ENCODE measurements at regions of chr3 and their contacts with region 1.

Region 1: GRCh38 chr3:151282921-151283320 is 4.6 kb upstream of the P2RY14 start:
- DNase-seq: no peak
- ATAC-seq: peak; percentile 77
- H3K4me3 ChIP-seq: no peak overlapping the region
- H3K27ac ChIP-seq: no peak overlapping the region
- H3K4me1 ChIP-seq: peaks cover 6% of the 10 kb centered on the region
- H3K27me3 ChIP-seq: no peaks in the 10 kb centered on the region
- CTCF ChIP-seq: peak; percentile 49 to 67 (median 53); a peak in 5 of 6 replicates
- EP300 ChIP-seq: no peak
- POLR2A ChIP-seq: no peak
- RAD21 ChIP-seq: peak; percentile 90

Region 2: GRCh38 chr3:150925751-150926201 is 357.1 kb before region 1 on chr3:
- CTCF ChIA-PET with region 1: no interaction called
- POLR2A ChIA-PET with region 1: no interaction called
- RAD21 ChIA-PET with region 1: no interaction called
- SMC1A ChIA-PET with region 1: no interaction called
- in situ Hi-C with region 1: no loop called
- intact Hi-C with region 1: loop called (anchors 5 kb)
- DNase-seq: no peak
- ATAC-seq: peak; percentile 99
- H3K4me3 ChIP-seq: no peak overlapping the region
- H3K27ac ChIP-seq: no peak overlapping the region
- H3K4me1 ChIP-seq: no peaks in the 10 kb centered on the region
- H3K27me3 ChIP-seq: peaks cover 0 to 2% of the 10 kb centered on the region in 2 experiments; a peak in 1 of 4 replicates
- CTCF ChIP-seq: peak; percentile 62 to 82 (median 81)
- EP300 ChIP-seq: no peak
- POLR2A ChIP-seq: no peak
- RAD21 ChIP-seq: peak; percentile 74

Region 3: GRCh38 chr3:151234825-151235224 is 48.1 kb before region 1 on chr3:
- CTCF ChIA-PET with region 1: interaction called, 182 read pairs
- POLR2A ChIA-PET with region 1: no interaction called
- RAD21 ChIA-PET with region 1: interaction called, 50 read pairs
- SMC1A ChIA-PET with region 1: interaction called, 98 read pairs
- in situ Hi-C with region 1: no loop called
- intact Hi-C with region 1: no loop called
- DNase-seq: no peak
- ATAC-seq: no peak
- H3K4me3 ChIP-seq: no peak overlapping the region
- H3K27ac ChIP-seq: no peak overlapping the region
- H3K4me1 ChIP-seq: no peaks in the 10 kb centered on the region
- H3K27me3 ChIP-seq: no peaks in the 10 kb centered on the region
- CTCF ChIP-seq: no peak
- EP300 ChIP-seq: no peak
- POLR2A ChIP-seq: no peak
- RAD21 ChIP-seq: no peak

Region 4: GRCh38 chr3:151265866-151266265 is 17.1 kb before region 1 on chr3:
- CTCF ChIA-PET with region 1: interaction called, 18 read pairs
- POLR2A ChIA-PET with region 1: no interaction called
- RAD21 ChIA-PET with region 1: interaction called, 9 read pairs
- SMC1A ChIA-PET with region 1: interaction called, 21 read pairs
- in situ Hi-C with region 1: no loop called
- intact Hi-C with region 1: no loop called
- DNase-seq: peak; percentile 69
- ATAC-seq: peak; percentile 98
- H3K4me3 ChIP-seq: no peak overlapping the region
- H3K27ac ChIP-seq: no peak overlapping the region
- H3K4me1 ChIP-seq: peaks cover 7% of the 10 kb centered on the region; the same call in 1 of the 2 replicates
- H3K27me3 ChIP-seq: no peaks in the 10 kb centered on the region
- CTCF ChIP-seq: no peak
- EP300 ChIP-seq: peak; percentile 47 to 52; a peak in 3 of 4 replicates
- POLR2A ChIP-seq: no peak
- RAD21 ChIP-seq: no peak

Region 5: GRCh38 chr3:151379083-151379734 is 96.3 kb after region 1 on chr3:
- CTCF ChIA-PET with region 1: no interaction called
- POLR2A ChIA-PET with region 1: no interaction called
- RAD21 ChIA-PET with region 1: no interaction called
- SMC1A ChIA-PET with region 1: no interaction called
- in situ Hi-C with region 1: no loop called
- intact Hi-C with region 1: no loop called
- DNase-seq: no peak
- ATAC-seq: peak; percentile 82
- H3K4me3 ChIP-seq: no peak overlapping the region
- H3K27ac ChIP-seq: no peak overlapping the region
- H3K4me1 ChIP-seq: peaks cover 17% of the 10 kb centered on the region; the same call in 1 of the 2 replicates
- H3K27me3 ChIP-seq: no peaks in the 10 kb centered on the region
- CTCF ChIP-seq: peak; percentile 61 to 86 (median 69)
- EP300 ChIP-seq: no peak
- POLR2A ChIP-seq: no peak
- RAD21 ChIP-seq: peak; percentile 59

Region 6: GRCh38 chr3:151395806-151396205 is 112.9 kb after region 1 on chr3:
- CTCF ChIA-PET with region 1: no interaction called
- POLR2A ChIA-PET with region 1: no interaction called
- RAD21 ChIA-PET with region 1: no interaction called
- SMC1A ChIA-PET with region 1: no interaction called
- in situ Hi-C with region 1: no loop called
- intact Hi-C with region 1: no loop called
- DNase-seq: no peak
- ATAC-seq: no peak
- H3K4me3 ChIP-seq: no peak overlapping the region
- H3K27ac ChIP-seq: no peak overlapping the region
- H3K4me1 ChIP-seq: no peaks in the 10 kb centered on the region
- H3K27me3 ChIP-seq: no peaks in the 10 kb centered on the region; a peak in 1 of 4 replicates
- CTCF ChIP-seq: no peak
- EP300 ChIP-seq: no peak
- POLR2A ChIP-seq: no peak
- RAD21 ChIP-seq: no peak

Region 7: GRCh38 chr3:151477591-151478334 is 194.8 kb after region 1 on chr3:
- CTCF ChIA-PET with region 1: no interaction called
- POLR2A ChIA-PET with region 1: no interaction called
- RAD21 ChIA-PET with region 1: no interaction called
- SMC1A ChIA-PET with region 1: no interaction called
- in situ Hi-C with region 1: no loop called
- intact Hi-C with region 1: no loop called
- DNase-seq: no peak
- ATAC-seq: no peak
- H3K4me3 ChIP-seq: no peak overlapping the region
- H3K27ac ChIP-seq: no peak overlapping the region
- H3K4me1 ChIP-seq: no peaks in the 10 kb centered on the region
- H3K27me3 ChIP-seq: no peaks in the 10 kb centered on the region; a peak in 2 of 4 replicates
- CTCF ChIP-seq: no peak
- EP300 ChIP-seq: no peak
- POLR2A ChIP-seq: no peak
- RAD21 ChIP-seq: no peak

Region 8: DNA sequence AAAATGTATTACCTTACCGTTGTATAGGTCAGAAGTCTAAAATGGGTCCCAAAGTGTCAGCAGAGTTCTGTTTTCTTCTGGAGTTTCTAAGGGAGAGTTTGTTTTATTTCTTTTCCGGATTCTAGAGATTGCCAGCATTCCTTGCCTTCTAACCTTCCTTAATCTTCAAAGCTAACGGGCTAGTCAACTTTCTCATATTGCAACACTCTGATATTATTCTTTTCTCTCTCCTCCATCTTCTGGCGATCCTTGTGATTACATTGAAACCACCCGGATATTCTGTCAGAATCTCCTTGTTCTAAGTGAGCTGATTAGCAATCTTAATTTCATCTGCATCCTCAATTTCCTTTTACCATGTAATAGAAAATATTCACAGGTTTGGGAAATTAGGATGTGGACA is 414.6 kb after region 1 on chr3:
- CTCF ChIA-PET with region 1: no interaction called
- POLR2A ChIA-PET with region 1: no interaction called
- RAD21 ChIA-PET with region 1: no interaction called
- SMC1A ChIA-PET with region 1: no interaction called
- in situ Hi-C with region 1: no loop called
- intact Hi-C with region 1: no loop called
- DNase-seq: no peak
- ATAC-seq: no peak
- H3K4me3 ChIP-seq: no peak overlapping the region
- H3K27ac ChIP-seq: no peak overlapping the region
- H3K4me1 ChIP-seq: no peaks in the 10 kb centered on the region
- H3K27me3 ChIP-seq: no peaks in the 10 kb centered on the region
- CTCF ChIP-seq: no peak
- EP300 ChIP-seq: no peak
- POLR2A ChIP-seq: no peak
- RAD21 ChIP-seq: no peak

Measured in GM12878 (cell line).